CD14-positive monocyte (primary cell): ENCODE measurements at regions of chr18 and their contacts with region 1.

Region 1: GRCh38 chr18:12990967-12991838 is at the start of gene CEP192:
- DNase-seq: peak; percentile 95 to 97 (median 97)
- H3K4me3 ChIP-seq: peak within 1 kb of the TSS; percentile 62 to 98 (median 76)
- H3K4me3 Mint-ChIP-seq: peak within 1 kb of the TSS; percentile 98 to 99
- H3K27ac ChIP-seq: peak within 1 kb of the TSS; percentile 76 to 91
- H3K27ac Mint-ChIP-seq: peak within 1 kb of the TSS; percentile 93 to 97 (median 96)
- H3K4me1 ChIP-seq: peaks cover 21 to 29% of the 10 kb centered on the region in 2 donors
- H3K4me1 Mint-ChIP-seq: peaks cover 26% of the 10 kb centered on the region
- H3K27me3 ChIP-seq: no peaks in the 10 kb centered on the region
- H3K27me3 Mint-ChIP-seq: no peaks in the 10 kb centered on the region
- CTCF ChIP-seq: no peak
- polyA plus RNA-seq, gene CEP192: 3.0 to 29.6 (median 3.7) TPM

Region 2: DNA sequence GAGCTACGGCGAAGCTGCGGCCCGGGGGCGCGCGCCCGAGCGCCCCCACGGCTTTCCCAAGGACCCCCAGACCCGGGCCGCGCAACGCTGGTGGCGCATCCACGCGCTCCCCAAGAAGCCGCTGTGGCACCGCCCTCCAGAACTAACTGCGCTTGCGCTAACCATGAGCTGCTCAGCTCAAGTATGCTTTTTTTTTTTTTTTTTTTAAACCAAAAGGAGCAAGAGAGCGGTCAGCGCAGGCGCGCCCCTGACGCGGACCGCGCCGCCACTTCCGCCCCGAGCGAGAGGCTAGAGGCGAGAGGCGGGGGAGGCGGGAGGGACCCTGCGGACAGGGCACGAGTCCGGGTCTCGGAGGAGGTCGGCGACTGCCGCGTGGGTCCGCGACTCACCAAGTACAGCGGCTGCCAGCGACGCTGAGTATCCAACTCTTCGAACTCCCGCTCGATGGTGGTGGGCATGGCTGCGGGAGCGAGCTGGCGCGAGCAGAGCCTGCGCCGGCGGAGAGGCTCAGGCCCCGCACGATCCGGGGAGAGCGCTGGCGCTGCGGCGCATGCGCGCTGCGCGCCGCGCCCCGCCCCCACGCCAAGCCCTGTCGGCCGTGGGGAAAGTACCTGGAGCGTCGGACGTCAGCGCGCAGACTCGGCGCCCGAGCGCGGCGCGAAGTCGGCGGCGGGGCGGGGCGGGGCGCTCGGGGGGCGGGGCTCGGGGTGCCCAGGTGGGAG is 107.4 kb before region 1 on chr18 and contains the start of gene PTPN2:
- intact Hi-C with region 1: loop called in 1 of 2 experiments (anchors 10 kb)
- DNase-seq: peak; percentile 95 to 96 (median 96)
- H3K4me3 ChIP-seq: peak within 1 kb of the TSS; percentile 69 to 96 (median 83)
- H3K4me3 Mint-ChIP-seq: peak within 1 kb of the TSS; percentile 90 to 94
- H3K27ac ChIP-seq: peak within 1 kb of the TSS; percentile 97 to 98
- H3K27ac Mint-ChIP-seq: peak within 1 kb of the TSS; percentile 92 to 97 (median 96)
- H3K4me1 ChIP-seq: peaks cover 58 to 62% of the 10 kb centered on the region in 2 donors
- H3K4me1 Mint-ChIP-seq: peaks cover 63% of the 10 kb centered on the region
- H3K27me3 ChIP-seq: no peaks in the 10 kb centered on the region
- H3K27me3 Mint-ChIP-seq: no peaks in the 10 kb centered on the region
- CTCF ChIP-seq: no peak
- polyA plus RNA-seq, gene PTPN2: 55.6 to 108 (median 78.4) TPM

Region 3: DNA sequence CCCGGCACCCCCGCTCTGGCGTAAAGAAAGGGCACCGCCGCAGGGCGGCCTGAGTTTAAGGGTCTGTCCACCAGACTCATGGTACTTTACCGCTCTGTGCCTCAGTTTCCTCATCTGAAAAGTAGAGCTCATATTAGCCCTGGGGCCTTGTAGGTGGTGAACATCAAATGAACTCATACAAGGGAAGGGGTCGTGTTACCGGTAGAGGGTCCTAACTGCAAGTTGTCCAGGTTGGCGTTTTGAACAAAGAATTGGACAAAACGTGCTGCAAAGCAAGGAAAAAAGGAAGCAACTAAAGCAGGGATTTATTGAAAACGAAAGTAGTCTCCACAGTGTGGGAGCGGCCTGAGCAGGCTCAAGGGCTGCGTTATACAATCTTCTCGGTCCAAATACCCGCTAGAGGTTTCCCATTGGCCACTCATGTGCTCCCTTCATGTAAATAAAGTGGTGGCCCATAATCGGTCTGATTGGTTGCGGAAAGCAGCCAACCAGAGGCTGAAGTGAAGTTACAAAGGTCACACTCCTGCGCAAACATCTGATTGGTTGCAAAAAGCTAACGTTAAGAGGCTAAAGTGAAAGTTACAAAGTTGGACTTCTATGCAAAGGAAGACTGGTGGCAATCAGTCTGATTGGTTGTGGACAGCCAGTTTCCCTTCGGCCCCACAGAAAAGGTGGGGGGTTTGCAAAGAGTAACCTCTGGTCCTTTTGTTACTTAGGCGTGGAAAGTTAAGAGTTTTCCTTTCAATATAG is 146.6 kb after region 1 on chr18:
- intact Hi-C with region 1: loop called (anchors 5 to 10 kb)
- DNase-seq: peak; percentile 92 to 94 (median 93)
- H3K4me3 ChIP-seq: peak overlapping the region; percentile 53 to 95 (median 82)
- H3K4me3 Mint-ChIP-seq: peak overlapping the region; percentile 96 to 100
- H3K27ac ChIP-seq: peak overlapping the region; percentile 78 to 91
- H3K27ac Mint-ChIP-seq: peak overlapping the region; percentile 92 to 100 (median 99)
- H3K4me1 ChIP-seq: peaks cover 20 to 22% of the 10 kb centered on the region in 2 donors
- H3K4me1 Mint-ChIP-seq: peaks cover 24% of the 10 kb centered on the region
- H3K27me3 ChIP-seq: peaks cover 0 to 18% of the 10 kb centered on the region in 2 donors
- H3K27me3 Mint-ChIP-seq: peaks cover 13 to 32% (median 21%) of the 10 kb centered on the region in 3 donors
- CTCF ChIP-seq: no peak

Region 4: DNA sequence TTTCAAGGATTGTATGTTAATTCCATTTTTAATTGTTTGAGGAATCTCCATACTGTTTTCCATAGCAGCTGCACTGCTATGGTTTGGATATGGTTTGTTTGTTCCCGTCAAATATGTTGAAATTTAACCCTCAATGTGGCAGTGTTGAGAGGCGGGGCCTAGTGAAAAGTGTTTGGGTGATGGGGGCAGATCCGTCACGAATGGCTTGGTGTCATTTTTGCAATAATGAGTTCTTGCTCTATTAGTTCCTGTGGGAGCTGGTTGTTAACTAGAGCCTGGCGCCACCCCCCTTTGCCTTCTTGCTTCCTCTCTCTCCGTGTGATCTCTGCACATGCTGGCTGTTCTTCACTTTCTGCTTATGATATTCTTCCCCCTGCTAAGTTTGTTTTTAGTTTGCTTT is 155.9 kb after region 1 on chr18:
- intact Hi-C with region 1: loop called in 1 of 2 experiments (anchors 10 kb)
- DNase-seq: peak; percentile 22 to 38 (median 28)
- H3K4me3 ChIP-seq: no peak overlapping the region
- H3K4me3 Mint-ChIP-seq: peak overlapping the region in 1 of 2 donors; percentile 71
- H3K27ac ChIP-seq: no peak overlapping the region
- H3K27ac Mint-ChIP-seq: peak overlapping the region in 4 of 7 donors; percentile 2 to 22 (median 18)
- H3K4me1 ChIP-seq: no peaks in the 10 kb centered on the region
- H3K4me1 Mint-ChIP-seq: peaks cover 9% of the 10 kb centered on the region
- H3K27me3 ChIP-seq: no peaks in the 10 kb centered on the region
- H3K27me3 Mint-ChIP-seq: peaks cover 0 to 3% (median 1%) of the 10 kb centered on the region in 3 donors
- CTCF ChIP-seq: no peak